Aorta (tissue), 5 donors: ENCODE measurements at regions of chr10 and their contacts with region 1.

Region 1: GRCh38 chr10:58291538-58292174 is 22.7 kb downstream of the CISD1 start:
- DNase-seq: no peak
- ATAC-seq: peak; percentile 74
- H3K4me3 ChIP-seq: no peak overlapping the region
- H3K27ac ChIP-seq: no peak overlapping the region
- H3K4me1 ChIP-seq: no peaks in the 10 kb centered on the region
- H3K27me3 ChIP-seq: no peaks in the 10 kb centered on the region

Region 2: GRCh38 chr10:57202361-57202760 is 1089.3 kb before region 1 on chr10:
- intact Hi-C with region 1: no loop called
- DNase-seq: no peak
- ATAC-seq: no peak
- H3K4me3 ChIP-seq: no peak overlapping the region
- H3K27ac ChIP-seq: no peak overlapping the region
- H3K4me1 ChIP-seq: no peaks in the 10 kb centered on the region
- H3K27me3 ChIP-seq: no peaks in the 10 kb centered on the region

Region 3: GRCh38 chr10:58178811-58179210 is 112.8 kb before region 1 on chr10:
- intact Hi-C with region 1: loop called (anchors 2 kb)
- DNase-seq: no peak
- ATAC-seq: no peak
- H3K4me3 ChIP-seq: no peak overlapping the region
- H3K27ac ChIP-seq: no peak overlapping the region
- H3K4me1 ChIP-seq: no peaks in the 10 kb centered on the region
- H3K27me3 ChIP-seq: no peaks in the 10 kb centered on the region

Region 4: GRCh38 chr10:58384999-58385783 is 93.5 kb after region 1 on chr10 and contains the start of gene TFAM:
- intact Hi-C with region 1: no loop called
- DNase-seq: peak; percentile 97 to 99
- ATAC-seq: peak; percentile 99
- H3K4me3 ChIP-seq: peak within 1 kb of the TSS; percentile 57 to 71
- H3K27ac ChIP-seq: peak within 1 kb of the TSS; percentile 76 to 80
- H3K4me1 ChIP-seq: peaks cover 2 to 4% of the 10 kb centered on the region in 2 donors
- H3K27me3 ChIP-seq: no peaks in the 10 kb centered on the region
- total RNA-seq, gene TFAM: 20.0 to 25.5 TPM